ENCODE measurements at regions of chr9 and their contacts with region 1.

Region 1: GRCh38 chr9:104386425-104387069 is 117.5 kb upstream of the OR13F1 start:
- DNase-seq: no peak
- H3K4me3 ChIP-seq: no peak overlapping the region
- H3K27me3 ChIP-seq: no peaks in the 10 kb centered on the region
- CTCF ChIP-seq: peak; percentile 66

Region 2: GRCh38 chr9:104027295-104027694 is 359.3 kb before region 1 on chr9:
- CTCF ChIA-PET with region 1: interaction called, 27 read pairs
- POLR2A ChIA-PET with region 1: no interaction called
- DNase-seq: no peak
- H3K4me3 ChIP-seq: no peak overlapping the region
- H3K27me3 ChIP-seq: no peaks in the 10 kb centered on the region
- CTCF ChIP-seq: no peak

Measured in BJ (cell line).